ENCODE measurements at regions of chr19 and their contacts with region 1.

Region 1: DNA sequence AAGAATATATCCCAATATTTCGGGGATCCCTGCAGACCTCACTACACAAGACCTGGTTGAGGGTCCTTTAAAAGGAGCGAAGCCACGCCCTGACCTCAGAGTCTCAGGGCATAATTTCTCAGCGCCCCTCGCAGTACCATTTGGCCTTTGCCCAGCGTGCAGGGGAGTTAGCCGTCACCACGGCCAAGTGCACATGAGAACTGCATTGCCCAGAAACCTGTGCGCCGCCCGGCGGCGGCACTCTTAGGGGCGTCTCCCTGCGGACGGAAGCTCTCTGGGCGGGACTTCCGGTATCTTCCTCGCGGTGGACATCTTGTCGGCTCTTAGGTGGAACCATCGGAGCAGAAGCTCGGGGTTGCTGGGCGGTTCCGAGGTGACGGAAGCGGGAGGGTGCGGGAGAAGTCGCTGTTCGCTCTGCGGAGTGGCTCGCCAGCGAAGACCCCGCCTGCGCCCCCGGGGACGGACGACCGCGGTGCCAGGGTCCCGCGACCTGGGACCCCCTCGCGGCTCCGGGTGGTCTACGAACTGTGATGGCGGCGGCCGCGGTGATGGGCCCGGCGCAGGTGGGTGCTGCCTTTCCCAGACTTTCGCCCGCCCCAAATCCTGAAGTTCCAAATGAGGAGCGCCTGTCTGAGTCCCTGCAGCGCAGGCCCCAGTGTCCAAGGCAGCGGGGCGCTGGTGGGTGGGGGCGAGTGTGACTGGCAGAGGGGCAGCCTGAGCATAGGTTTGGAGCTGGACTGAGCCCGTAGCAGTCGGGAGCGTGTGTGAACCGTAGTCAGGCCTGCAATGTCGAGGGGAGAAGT is at the start of gene ZNF134:
- DNase-seq: peak; percentile 77 to 94 (median 91)
- ATAC-seq: peak; percentile 99
- H3K4me3 ChIP-seq: peak within 1 kb of the TSS; percentile 78 to 90
- H3K4me3 Mint-ChIP-seq: peak within 1 kb of the TSS; percentile 90
- H3K27ac ChIP-seq: peak within 1 kb of the TSS; percentile 37 to 63
- H3K27ac Mint-ChIP-seq: peak within 1 kb of the TSS; percentile 90
- H3K4me1 ChIP-seq: peaks cover 13% of the 10 kb centered on the region
- H3K4me1 Mint-ChIP-seq: peaks cover 31% of the 10 kb centered on the region
- H3K27me3 ChIP-seq: no peaks in the 10 kb centered on the region
- H3K27me3 Mint-ChIP-seq: no peaks in the 10 kb centered on the region
- CTCF ChIP-seq: peak; percentile 16
- total RNA-seq, gene ZNF134: 35.2 to 36.5 TPM

Region 2: DNA sequence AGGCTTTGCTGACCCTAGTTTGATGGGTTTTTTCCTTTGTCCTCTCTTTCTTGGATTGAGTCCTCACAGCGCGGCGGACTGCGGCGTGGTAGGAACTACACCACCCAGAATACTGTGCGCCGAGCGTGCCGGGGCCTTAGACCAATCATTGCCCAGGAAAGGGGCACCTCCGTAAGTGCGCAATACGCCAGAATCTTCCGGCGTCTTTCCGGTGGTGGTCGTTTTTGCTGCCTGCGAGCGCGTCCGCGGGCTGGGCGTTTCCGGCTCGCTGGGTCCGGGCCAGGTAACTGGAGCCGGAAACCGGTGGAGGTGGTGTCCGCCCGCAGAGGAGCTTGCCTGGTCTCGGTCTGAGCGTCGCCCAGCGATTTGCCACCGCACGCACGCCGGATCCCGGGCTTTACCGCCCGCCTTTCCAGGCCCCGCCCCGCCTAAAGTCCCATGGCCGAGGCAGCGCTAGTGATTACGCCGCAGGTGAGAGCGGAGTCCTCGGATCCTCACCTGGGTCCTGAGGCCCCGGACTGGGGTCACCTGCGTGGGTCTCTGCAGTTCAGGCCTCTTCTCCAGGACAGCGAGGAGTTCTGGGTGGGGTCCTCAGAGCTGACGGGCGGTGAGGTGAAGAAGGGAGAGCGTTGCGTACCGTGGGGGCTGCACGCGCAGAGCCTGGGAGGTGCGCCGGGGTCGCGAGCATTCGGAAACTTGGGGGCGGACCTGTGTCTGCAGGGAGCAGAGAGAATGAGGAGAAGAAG is 86.8 kb before region 1 on chr19 and contains the start of gene ZNF549:
- CTCF ChIA-PET with region 1: no interaction called
- POLR2A ChIA-PET with region 1: no interaction called
- intact Hi-C with region 1: loop called in 1 of 2 experiments (anchors 1 kb)
- DNase-seq: peak; percentile 77 to 95 (median 89)
- ATAC-seq: peak; percentile 98
- H3K4me3 ChIP-seq: peak within 1 kb of the TSS; percentile 97
- H3K4me3 Mint-ChIP-seq: peak within 1 kb of the TSS; percentile 94
- H3K27ac ChIP-seq: peak within 1 kb of the TSS; percentile 80 to 88
- H3K27ac Mint-ChIP-seq: peak within 1 kb of the TSS; percentile 96
- H3K4me1 ChIP-seq: peaks cover 16% of the 10 kb centered on the region
- H3K4me1 Mint-ChIP-seq: peaks cover 32% of the 10 kb centered on the region
- H3K27me3 ChIP-seq: no peaks in the 10 kb centered on the region
- H3K27me3 Mint-ChIP-seq: no peaks in the 10 kb centered on the region
- CTCF ChIP-seq: no peak
- total RNA-seq, gene ZNF549: 14.6 to 17.1 TPM

Region 3: DNA sequence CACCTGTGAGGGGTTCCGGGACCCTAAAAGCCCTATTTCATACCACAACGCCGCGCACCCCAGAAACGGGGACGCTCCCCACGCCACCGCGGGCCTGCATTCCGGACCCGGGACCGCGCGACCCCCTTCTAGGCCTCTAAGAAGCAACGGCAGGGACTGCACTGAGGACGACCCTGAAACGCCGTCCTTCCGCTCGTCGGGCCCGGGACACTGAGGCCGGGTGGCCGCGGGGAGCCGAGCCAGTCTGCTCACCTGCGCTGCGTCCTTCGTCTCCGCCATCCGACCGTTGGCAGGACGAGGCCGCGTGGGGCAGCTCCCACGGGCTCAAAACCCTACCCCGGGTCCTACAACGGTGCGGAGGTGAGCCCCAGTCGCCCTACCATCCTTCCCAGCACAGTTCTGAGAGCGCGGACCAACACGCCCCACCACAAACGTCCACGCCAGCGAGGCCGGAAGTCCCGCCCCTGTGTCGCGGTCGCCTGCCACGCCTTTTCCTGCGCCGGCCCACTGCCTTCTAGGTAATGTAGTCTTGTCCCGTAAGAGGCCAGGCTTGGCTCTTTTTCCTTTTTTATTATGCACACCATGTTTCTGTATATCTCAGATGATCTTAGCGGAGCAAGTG is 54.6 kb before region 1 on chr19 and contains the start of gene ZNF550:
- CTCF ChIA-PET with region 1: no interaction called
- POLR2A ChIA-PET with region 1: interaction called, 4 read pairs
- intact Hi-C with region 1: loop called in 1 of 2 experiments (anchors 2 kb)
- DNase-seq: peak; percentile 74 to 92 (median 88)
- ATAC-seq: peak; percentile 96
- H3K4me3 ChIP-seq: peak within 1 kb of the TSS; percentile 77 to 89
- H3K4me3 Mint-ChIP-seq: peak within 1 kb of the TSS; percentile 98
- H3K27ac ChIP-seq: peak within 1 kb of the TSS; percentile 64 to 70
- H3K27ac Mint-ChIP-seq: peak within 1 kb of the TSS; percentile 96
- H3K4me1 ChIP-seq: peaks cover 20% of the 10 kb centered on the region
- H3K4me1 Mint-ChIP-seq: peaks cover 32% of the 10 kb centered on the region
- H3K27me3 ChIP-seq: no peaks in the 10 kb centered on the region
- H3K27me3 Mint-ChIP-seq: no peaks in the 10 kb centered on the region
- CTCF ChIP-seq: no peak
- total RNA-seq, gene ZNF550: 15.4 to 17.6 TPM

Region 4: GRCh38 chr19:57583521-57584416 is 30.4 kb before region 1 on chr19 and contains the start of gene ZIK1:
- CTCF ChIA-PET with region 1: no interaction called
- POLR2A ChIA-PET with region 1: interaction called, 8 read pairs
- intact Hi-C with region 1: loop called (anchors 1 kb)
- DNase-seq: peak; percentile 75 to 95 (median 88)
- ATAC-seq: peak; percentile 87
- H3K4me3 ChIP-seq: peak within 1 kb of the TSS; percentile 59 to 67
- H3K4me3 Mint-ChIP-seq: peak within 1 kb of the TSS; percentile 98
- H3K27ac ChIP-seq: peak within 1 kb of the TSS; percentile 37 to 56
- H3K27ac Mint-ChIP-seq: peak within 1 kb of the TSS; percentile 91
- H3K4me1 ChIP-seq: peaks cover 21% of the 10 kb centered on the region
- H3K4me1 Mint-ChIP-seq: peaks cover 19% of the 10 kb centered on the region
- H3K27me3 ChIP-seq: no peaks in the 10 kb centered on the region
- H3K27me3 Mint-ChIP-seq: no peaks in the 10 kb centered on the region
- CTCF ChIP-seq: peak; percentile 12
- total RNA-seq, gene ZIK1: 10.0 to 12.8 TPM

Region 5: DNA sequence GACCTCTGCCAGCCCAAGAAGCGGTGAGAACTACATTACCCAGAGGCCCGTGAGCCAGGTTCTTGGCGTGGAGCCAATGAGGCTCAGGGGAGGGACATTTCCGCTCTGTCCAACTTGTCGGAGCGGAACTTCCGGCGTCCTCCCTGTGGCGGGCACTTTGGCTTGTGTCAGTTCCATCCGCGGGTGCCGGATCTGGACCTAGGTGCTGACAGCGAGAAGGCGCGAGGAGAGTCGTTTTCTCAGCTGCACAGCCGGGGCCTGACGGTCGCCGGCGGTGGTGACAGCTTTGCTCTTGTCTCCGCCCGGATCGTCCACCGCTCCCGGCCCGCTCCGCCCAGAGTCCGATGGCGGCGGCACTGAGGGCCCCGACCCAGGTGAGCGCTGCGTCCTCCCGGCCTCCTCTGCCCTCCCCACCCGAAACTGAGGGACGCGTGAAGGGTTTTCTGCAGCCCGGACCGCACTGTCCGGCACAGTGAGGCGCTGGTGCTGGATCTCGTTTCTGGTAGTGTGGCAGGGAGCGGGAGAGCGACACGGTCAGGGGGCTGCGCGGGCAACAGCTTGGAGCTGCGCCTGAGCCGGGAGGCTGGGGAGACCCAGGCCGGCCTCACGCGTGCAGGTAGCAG is 14.3 kb before region 1 on chr19 and contains the start of gene ZNF530:
- CTCF ChIA-PET with region 1: interaction called, 3 read pairs
- POLR2A ChIA-PET with region 1: no interaction called
- intact Hi-C with region 1: loop called in 1 of 2 experiments (anchors 1 kb)
- DNase-seq: peak; percentile 61 to 93 (median 88)
- ATAC-seq: peak; percentile 86
- H3K4me3 ChIP-seq: peak within 1 kb of the TSS; percentile 67 to 81
- H3K4me3 Mint-ChIP-seq: peak within 1 kb of the TSS; percentile 88
- H3K27ac ChIP-seq: peak within 1 kb of the TSS; percentile 16 to 51
- H3K27ac Mint-ChIP-seq: peak within 1 kb of the TSS; percentile 33
- H3K4me1 ChIP-seq: peaks cover 13% of the 10 kb centered on the region
- H3K4me1 Mint-ChIP-seq: peaks cover 25% of the 10 kb centered on the region
- H3K27me3 ChIP-seq: no peaks in the 10 kb centered on the region
- H3K27me3 Mint-ChIP-seq: no peaks in the 10 kb centered on the region
- CTCF ChIP-seq: no peak
- total RNA-seq, gene ZNF530: 3.6 to 4.2 TPM

Region 6: DNA sequence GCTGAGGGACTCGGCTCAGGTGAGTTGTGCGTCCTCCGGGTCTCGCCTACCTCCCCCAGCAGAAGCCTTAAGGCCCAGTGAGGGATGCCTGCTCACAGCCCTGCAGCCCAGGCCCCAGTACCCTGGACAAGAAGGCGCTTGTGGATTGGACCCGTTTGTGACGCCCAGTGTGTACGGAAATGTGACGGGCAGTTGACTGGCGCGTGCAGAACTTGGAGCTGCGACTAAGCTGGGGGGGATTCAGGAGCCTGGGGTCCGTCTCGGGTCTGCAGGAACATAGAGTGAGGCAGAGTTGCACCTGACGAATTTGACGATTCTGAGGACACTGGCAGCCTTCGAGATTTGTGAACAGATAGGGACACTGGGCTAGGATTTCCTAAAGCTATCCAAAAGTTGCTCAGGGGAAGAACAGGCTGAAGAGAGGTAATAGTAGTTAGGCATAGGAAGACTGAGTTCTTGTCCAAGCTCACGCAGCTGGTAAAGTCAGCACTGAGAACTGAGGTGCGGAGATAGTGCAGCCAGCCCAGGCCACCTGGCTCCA is 68.2 kb after region 1 on chr19:
- CTCF ChIA-PET with region 1: no interaction called
- POLR2A ChIA-PET with region 1: no interaction called
- intact Hi-C with region 1: loop called in 1 of 2 experiments (anchors 1 kb)
- DNase-seq: no peak
- ATAC-seq: no peak
- H3K4me3 ChIP-seq: peak overlapping the region; percentile 91 to 94
- H3K4me3 Mint-ChIP-seq: peak overlapping the region; percentile 98
- H3K27ac ChIP-seq: peak overlapping the region; percentile 69 to 71
- H3K27ac Mint-ChIP-seq: peak overlapping the region; percentile 97
- H3K4me1 ChIP-seq: peaks cover 19% of the 10 kb centered on the region
- H3K4me1 Mint-ChIP-seq: peaks cover 36% of the 10 kb centered on the region
- H3K27me3 ChIP-seq: peaks cover 0 to 2% of the 10 kb centered on the region in 2 experiments
- H3K27me3 Mint-ChIP-seq: peaks cover 7% of the 10 kb centered on the region
- CTCF ChIP-seq: no peak

Region 7: GRCh38 chr19:57769345-57770131 is 155.4 kb after region 1 on chr19 and contains the start of gene ZNF586:
- CTCF ChIA-PET with region 1: no interaction called
- POLR2A ChIA-PET with region 1: no interaction called
- intact Hi-C with region 1: loop called in 1 of 2 experiments (anchors 1 kb)
- DNase-seq: peak; percentile 64 to 94 (median 86)
- ATAC-seq: peak; percentile 99
- H3K4me3 ChIP-seq: peak within 1 kb of the TSS; percentile 73 to 90
- H3K4me3 Mint-ChIP-seq: peak within 1 kb of the TSS; percentile 94
- H3K27ac ChIP-seq: peak within 1 kb of the TSS; percentile 61 to 86
- H3K27ac Mint-ChIP-seq: peak within 1 kb of the TSS; percentile 97
- H3K4me1 ChIP-seq: peaks cover 17% of the 10 kb centered on the region
- H3K4me1 Mint-ChIP-seq: peaks cover 35% of the 10 kb centered on the region
- H3K27me3 ChIP-seq: no peaks in the 10 kb centered on the region
- H3K27me3 Mint-ChIP-seq: no peaks in the 10 kb centered on the region
- CTCF ChIP-seq: no peak
- total RNA-seq, gene ZNF586: 54.0 to 57.6 TPM

Region 8: DNA sequence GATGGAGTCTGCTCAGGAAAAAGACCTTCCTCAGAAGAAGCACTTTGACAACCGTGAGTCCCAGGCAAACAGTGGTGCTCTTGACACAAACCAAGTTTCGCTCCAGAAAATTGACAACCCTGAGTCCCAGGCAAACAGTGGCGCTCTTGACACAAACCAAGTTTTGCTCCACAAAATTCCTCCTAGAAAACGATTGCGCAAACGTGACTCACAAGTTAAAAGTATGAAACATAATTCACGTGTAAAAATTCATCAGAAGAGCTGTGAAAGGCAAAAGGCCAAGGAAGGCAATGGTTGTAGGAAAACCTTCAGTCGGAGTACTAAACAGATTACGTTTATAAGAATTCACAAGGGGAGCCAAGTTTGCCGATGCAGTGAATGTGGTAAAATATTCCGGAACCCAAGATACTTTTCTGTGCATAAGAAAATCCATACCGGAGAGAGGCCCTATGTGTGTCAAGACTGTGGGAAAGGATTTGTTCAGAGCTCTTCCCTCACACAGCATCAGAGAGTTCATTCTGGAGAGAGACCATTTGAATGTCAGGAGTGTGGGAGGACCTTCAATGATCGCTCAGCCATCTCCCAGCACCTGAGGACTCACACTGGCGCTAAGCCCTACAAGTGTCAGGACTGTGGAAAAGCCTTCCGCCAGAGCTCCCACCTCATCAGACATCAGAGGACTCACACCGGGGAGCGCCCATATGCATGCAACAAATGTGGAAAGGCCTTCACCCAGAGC is 598.4 kb after region 1 on chr19:
- CTCF ChIA-PET with region 1: no interaction called
- POLR2A ChIA-PET with region 1: no interaction called
- intact Hi-C with region 1: no loop called
- DNase-seq: no peak
- ATAC-seq: no peak
- H3K4me3 ChIP-seq: no peak overlapping the region
- H3K4me3 Mint-ChIP-seq: no peak overlapping the region
- H3K27ac ChIP-seq: no peak overlapping the region
- H3K27ac Mint-ChIP-seq: no peak overlapping the region
- H3K4me1 ChIP-seq: no peaks in the 10 kb centered on the region
- H3K4me1 Mint-ChIP-seq: no peaks in the 10 kb centered on the region
- H3K27me3 ChIP-seq: no peaks in the 10 kb centered on the region
- H3K27me3 Mint-ChIP-seq: no peaks in the 10 kb centered on the region
- CTCF ChIP-seq: no peak